Common myeloid progenitor, CD34-positive (primary cell): ENCODE measurements at regions of chr6 and their contacts with region 1.

Region 1: GRCh38 chr6:70353343-70353913 is 50.5 kb upstream of the COL9A1 start:
- DNase-seq: no peak
- H3K4me3 ChIP-seq: no peak overlapping the region
- H3K27ac ChIP-seq: no peak overlapping the region
- H3K4me1 ChIP-seq: no peaks in the 10 kb centered on the region
- H3K27me3 ChIP-seq: peaks cover 0 to 1% (median 0%) of the 10 kb centered on the region in 5 experiments

Region 2: DNA sequence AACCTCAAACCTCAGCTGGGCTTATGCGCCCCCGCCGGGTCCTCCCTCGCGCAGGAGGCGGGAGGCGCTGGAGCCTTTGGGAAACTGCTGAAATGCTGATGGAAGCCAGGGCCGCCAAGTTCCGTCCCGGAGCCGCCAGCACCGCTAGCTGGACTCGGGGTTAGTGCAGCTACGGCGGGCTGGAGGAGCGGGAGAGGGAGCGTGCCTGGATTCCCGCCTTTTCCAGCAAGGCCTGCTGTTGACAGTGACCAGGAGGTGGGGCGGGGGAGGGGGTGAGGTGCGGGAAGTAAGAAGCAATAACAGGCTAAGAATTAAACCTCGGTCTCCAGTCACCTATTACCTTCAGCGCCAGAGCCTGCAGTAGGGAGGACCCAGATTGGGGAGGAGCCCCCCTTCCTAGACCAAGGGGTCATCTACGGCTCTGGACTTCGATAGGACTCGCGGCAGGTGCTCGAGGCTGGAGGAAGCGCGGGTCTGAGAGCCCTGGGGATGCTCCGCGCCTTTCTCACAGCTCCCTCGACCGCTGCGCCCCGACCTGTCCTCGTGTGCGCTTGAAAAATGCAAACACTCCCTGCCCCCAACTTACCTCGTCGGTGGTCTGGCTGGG is 71.0 kb before region 1 on chr6:
- CTCF ChIA-PET with region 1: no interaction called
- POLR2A ChIA-PET with region 1: no interaction called
- DNase-seq: no peak
- H3K4me3 ChIP-seq: peak overlapping the region in 4 of 7 experiments; percentile 19 to 57 (median 38)
- H3K27ac ChIP-seq: no peak overlapping the region
- H3K4me1 ChIP-seq: peaks cover 0 to 12% (median 5%) of the 10 kb centered on the region in 4 experiments
- H3K27me3 ChIP-seq: peaks cover 15 to 69% (median 24%) of the 10 kb centered on the region in 5 experiments

Region 3: GRCh38 chr6:70369332-70369950 is 16.0 kb after region 1 on chr6:
- CTCF ChIA-PET with region 1: interaction called, 13 read pairs
- POLR2A ChIA-PET with region 1: no interaction called
- DNase-seq: peak; percentile 61 to 84 (median 77)
- H3K4me3 ChIP-seq: no peak overlapping the region
- H3K27ac ChIP-seq: no peak overlapping the region
- H3K4me1 ChIP-seq: no peaks in the 10 kb centered on the region
- H3K27me3 ChIP-seq: peaks cover 0 to 8% (median 2%) of the 10 kb centered on the region in 5 experiments